HCT116 (cell line): ENCODE measurements at regions of chr3 and their contacts with region 1.

Region 1: DNA sequence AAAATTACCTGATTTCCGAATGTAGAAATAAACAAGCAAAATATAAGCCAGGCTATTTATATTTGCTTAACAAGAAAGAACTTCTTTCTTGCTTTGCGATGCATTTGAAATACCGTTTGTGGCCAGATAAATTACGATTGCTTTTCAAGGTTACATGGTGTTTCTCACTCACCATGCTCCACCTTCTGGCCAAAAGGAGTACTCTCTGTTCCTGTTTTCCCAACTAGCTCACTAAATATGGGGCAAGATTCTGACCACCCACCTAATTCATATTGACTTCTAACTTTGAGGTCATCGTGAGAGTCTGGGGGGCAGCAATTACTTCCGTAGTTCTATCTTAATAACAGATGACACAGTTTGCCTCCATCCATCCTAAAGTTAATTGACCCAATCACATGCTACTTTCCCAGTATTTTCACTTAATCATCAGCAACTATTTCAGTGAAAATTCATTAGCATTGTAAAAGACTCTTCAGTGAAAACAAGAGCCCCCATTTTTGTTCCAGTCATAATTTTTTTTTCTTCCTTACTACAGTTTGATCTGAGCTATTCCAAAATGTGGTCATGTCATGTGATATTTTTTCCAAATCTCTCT is 25.9 kb downstream of the ACP3 start:
- DNase-seq: peak; percentile 50
- ATAC-seq: peak; percentile 90
- H3K4me3 ChIP-seq: no peak overlapping the region
- H3K27ac ChIP-seq: no peak overlapping the region
- H3K4me1 ChIP-seq: peaks cover 0 to 8% of the 10 kb centered on the region in 2 experiments; a peak in 3 of 4 replicates
- H3K27me3 ChIP-seq: no peaks in the 10 kb centered on the region
- CTCF ChIP-seq: peak; percentile 78 to 87 (median 85)
- POLR2A ChIP-seq: no peak
- RAD21 ChIP-seq: peak; percentile 83

Region 2: GRCh38 chr3:132196113-132196512 is 147.0 kb before region 1 on chr3:
- CTCF ChIA-PET with region 1: no interaction called
- POLR2A ChIA-PET with region 1: no interaction called
- RAD21 ChIA-PET with region 1: no interaction called
- intact Hi-C with region 1: no loop called
- DNase-seq: no peak
- ATAC-seq: no peak
- H3K4me3 ChIP-seq: no peak overlapping the region
- H3K27ac ChIP-seq: no peak overlapping the region
- H3K4me1 ChIP-seq: no peaks in the 10 kb centered on the region
- H3K27me3 ChIP-seq: peaks cover 33% of the 10 kb centered on the region
- CTCF ChIP-seq: no peak
- POLR2A ChIP-seq: no peak
- RAD21 ChIP-seq: no peak

Region 3: GRCh38 chr3:132253262-132253878 is 89.7 kb before region 1 on chr3:
- CTCF ChIA-PET with region 1: interaction called, 105 read pairs
- POLR2A ChIA-PET with region 1: no interaction called
- RAD21 ChIA-PET with region 1: interaction called, 12 to 16 read pairs
- intact Hi-C with region 1: loop called (anchors 1 kb)
- DNase-seq: peak; percentile 56
- ATAC-seq: peak; percentile 87
- H3K4me3 ChIP-seq: no peak overlapping the region
- H3K27ac ChIP-seq: no peak overlapping the region
- H3K4me1 ChIP-seq: no peaks in the 10 kb centered on the region
- H3K27me3 ChIP-seq: no peaks in the 10 kb centered on the region
- CTCF ChIP-seq: peak; percentile 69 to 74 (median 73); a peak in 5 of 6 replicates
- POLR2A ChIP-seq: no peak
- RAD21 ChIP-seq: peak; percentile 70

Region 4: DNA sequence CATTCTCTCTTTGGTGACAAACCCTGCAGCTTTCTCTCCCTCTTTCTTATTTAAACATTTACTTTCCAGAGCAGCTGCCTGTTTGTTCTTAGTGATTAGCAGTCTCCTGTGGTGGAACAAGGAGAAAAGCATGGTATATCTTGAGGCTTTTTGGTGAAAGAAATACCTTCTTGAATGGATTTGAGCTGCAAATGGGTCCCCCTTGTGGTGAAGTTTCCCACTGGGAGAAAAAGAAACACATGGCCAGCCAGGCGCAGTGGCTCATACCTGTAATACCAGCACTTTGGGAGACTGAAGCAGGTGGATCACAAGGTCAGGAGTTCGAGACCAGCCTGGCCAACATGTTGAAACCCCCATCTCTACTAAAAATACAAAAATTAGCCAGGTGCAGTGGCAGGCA is 74.2 kb before region 1 on chr3:
- CTCF ChIA-PET with region 1: interaction called, 16 read pairs
- POLR2A ChIA-PET with region 1: no interaction called
- RAD21 ChIA-PET with region 1: no interaction called
- intact Hi-C with region 1: no loop called
- DNase-seq: peak; percentile 56
- ATAC-seq: peak; percentile 67
- H3K4me3 ChIP-seq: no peak overlapping the region
- H3K27ac ChIP-seq: no peak overlapping the region
- H3K4me1 ChIP-seq: no peaks in the 10 kb centered on the region; a peak in 1 of 4 replicates
- H3K27me3 ChIP-seq: no peaks in the 10 kb centered on the region
- CTCF ChIP-seq: peak; percentile 38 to 60 (median 58)
- POLR2A ChIP-seq: no peak
- RAD21 ChIP-seq: peak; percentile 42

Region 5: DNA sequence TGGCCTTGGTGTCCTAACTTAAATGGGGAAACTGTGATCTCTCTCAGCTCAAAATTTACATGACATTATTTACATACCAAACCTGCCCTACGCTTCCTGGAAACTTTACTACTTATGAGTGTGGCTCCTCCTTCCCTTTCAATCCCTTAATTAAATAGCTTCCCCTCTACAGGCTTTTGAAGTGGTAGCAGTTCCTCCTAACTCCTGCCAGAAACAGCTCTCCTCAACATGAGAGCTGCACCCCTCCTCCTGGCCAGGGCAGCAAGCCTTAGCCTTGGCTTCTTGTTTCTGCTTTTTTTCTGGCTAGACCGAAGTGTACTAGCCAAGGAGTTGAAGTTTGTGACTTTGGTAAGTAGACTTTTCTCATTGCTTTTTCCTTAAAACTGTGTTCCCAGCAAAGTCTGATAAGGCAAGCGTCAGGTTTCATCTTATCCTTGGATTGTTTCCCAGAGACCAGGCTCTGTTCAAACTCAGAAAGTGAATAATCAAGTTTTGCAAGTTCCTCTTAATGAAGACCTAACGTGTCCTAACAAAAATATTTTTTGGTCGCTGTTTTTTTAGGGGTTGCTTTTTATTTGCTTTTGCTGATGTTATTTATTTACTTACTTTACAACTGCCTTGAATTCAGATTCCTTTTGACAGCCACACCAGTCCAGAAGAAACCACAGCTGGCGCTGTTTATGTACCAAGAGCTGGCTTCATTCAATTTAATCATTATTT is 25.7 kb before region 1 on chr3 and contains the start of gene ACP3:
- CTCF ChIA-PET with region 1: interaction called, 12 read pairs
- POLR2A ChIA-PET with region 1: interaction called, 3 read pairs
- RAD21 ChIA-PET with region 1: no interaction called
- intact Hi-C with region 1: loop called (anchors 1 kb)
- DNase-seq: peak; percentile 43
- ATAC-seq: peak; percentile 92
- H3K4me3 ChIP-seq: peak within 1 kb of the TSS in 1 of 2 experiments; percentile 39; a peak in 2 of 4 replicates
- H3K27ac ChIP-seq: peak within 1 kb of the TSS; percentile 69
- H3K4me1 ChIP-seq: peaks cover 23 to 26% of the 10 kb centered on the region in 2 experiments
- H3K27me3 ChIP-seq: no peaks in the 10 kb centered on the region
- CTCF ChIP-seq: no peak
- POLR2A ChIP-seq: no peak
- RAD21 ChIP-seq: no peak
- total RNA-seq, gene ACP3: 0.79 TPM

Region 6: DNA sequence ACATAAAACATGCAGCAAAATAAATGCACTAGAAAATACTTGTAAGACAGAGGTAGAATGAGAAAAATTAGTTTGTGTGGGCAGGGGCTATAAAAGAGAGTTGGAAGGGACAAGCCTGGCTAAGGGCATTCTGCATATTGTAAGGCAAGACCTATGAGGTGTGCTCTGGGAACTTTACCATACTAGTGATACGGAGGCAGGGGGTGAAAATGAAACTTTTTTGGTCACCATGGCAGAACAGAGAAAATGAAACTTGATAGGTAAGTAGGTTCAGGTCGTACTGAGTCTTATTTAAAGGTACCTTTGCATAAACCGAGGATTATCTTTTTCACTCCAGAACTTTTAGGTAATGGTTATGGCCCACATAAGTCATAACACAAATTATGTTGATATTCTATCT is 179.2 kb after region 1 on chr3:
- CTCF ChIA-PET with region 1: no interaction called
- POLR2A ChIA-PET with region 1: no interaction called
- RAD21 ChIA-PET with region 1: no interaction called
- intact Hi-C with region 1: no loop called
- DNase-seq: no peak
- ATAC-seq: no peak
- H3K4me3 ChIP-seq: no peak overlapping the region
- H3K27ac ChIP-seq: no peak overlapping the region
- H3K4me1 ChIP-seq: no peaks in the 10 kb centered on the region
- H3K27me3 ChIP-seq: no peaks in the 10 kb centered on the region
- CTCF ChIP-seq: no peak
- POLR2A ChIP-seq: no peak
- RAD21 ChIP-seq: no peak